CD8-positive, alpha-beta T cell (primary cell): ENCODE measurements at regions of chr10 and their contacts with region 1.

Region 1: DNA sequence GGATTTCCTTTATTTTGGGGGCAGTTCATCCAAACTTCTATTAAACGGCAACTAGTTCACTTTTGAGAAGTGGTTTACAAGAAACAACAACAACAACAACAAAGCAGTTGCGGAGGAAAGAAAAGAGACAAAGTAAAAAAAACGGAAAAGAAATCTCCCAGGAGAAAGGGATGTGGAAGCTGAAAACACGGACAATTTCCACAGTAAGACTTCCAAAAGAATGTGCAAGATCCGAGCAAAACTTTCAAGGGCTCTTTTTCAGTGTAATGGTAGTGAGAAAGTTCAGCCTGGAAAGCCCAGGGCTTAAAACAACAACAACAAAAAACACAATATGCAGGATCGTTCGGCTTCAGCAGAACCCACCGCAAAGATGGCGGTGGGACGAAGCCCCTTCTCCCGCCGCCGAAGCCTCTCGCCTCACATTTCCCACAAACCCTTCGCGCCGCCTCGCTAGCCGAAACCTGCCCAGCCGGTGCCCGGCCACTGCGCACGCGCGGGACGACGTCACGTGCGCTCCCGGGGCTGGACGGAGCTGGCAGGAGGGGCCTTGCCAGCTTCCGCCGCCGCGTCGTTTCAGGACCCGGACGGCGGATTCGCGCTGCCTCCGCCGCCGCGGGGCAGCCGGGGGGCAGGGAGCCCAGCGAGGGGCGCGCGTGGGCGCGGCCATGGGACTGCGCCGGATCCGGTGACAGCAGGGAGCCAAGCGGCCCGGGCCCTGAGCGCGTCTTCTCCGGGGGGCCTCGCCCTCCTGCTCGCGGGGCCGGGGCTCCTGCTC is at the start of gene TNKS2:
- DNase-seq: peak; percentile 83 to 96 (median 92)
- ATAC-seq: peak; percentile 69
- H3K4me3 ChIP-seq: peak within 1 kb of the TSS; percentile 81 to 85
- H3K4me3 Mint-ChIP-seq: peak within 1 kb of the TSS; percentile 99
- H3K27ac ChIP-seq: peak within 1 kb of the TSS; percentile 88 to 91
- H3K27ac Mint-ChIP-seq: peak within 1 kb of the TSS; percentile 99
- H3K4me1 ChIP-seq: peaks cover 35% of the 10 kb centered on the region
- H3K4me1 Mint-ChIP-seq: peaks cover 64% of the 10 kb centered on the region
- H3K27me3 ChIP-seq: no peaks in the 10 kb centered on the region
- H3K27me3 Mint-ChIP-seq: no peaks in the 10 kb centered on the region
- CTCF ChIP-seq: no peak
- total RNA-seq, gene TNKS2: 46.4 to 49.4 TPM

Region 2: DNA sequence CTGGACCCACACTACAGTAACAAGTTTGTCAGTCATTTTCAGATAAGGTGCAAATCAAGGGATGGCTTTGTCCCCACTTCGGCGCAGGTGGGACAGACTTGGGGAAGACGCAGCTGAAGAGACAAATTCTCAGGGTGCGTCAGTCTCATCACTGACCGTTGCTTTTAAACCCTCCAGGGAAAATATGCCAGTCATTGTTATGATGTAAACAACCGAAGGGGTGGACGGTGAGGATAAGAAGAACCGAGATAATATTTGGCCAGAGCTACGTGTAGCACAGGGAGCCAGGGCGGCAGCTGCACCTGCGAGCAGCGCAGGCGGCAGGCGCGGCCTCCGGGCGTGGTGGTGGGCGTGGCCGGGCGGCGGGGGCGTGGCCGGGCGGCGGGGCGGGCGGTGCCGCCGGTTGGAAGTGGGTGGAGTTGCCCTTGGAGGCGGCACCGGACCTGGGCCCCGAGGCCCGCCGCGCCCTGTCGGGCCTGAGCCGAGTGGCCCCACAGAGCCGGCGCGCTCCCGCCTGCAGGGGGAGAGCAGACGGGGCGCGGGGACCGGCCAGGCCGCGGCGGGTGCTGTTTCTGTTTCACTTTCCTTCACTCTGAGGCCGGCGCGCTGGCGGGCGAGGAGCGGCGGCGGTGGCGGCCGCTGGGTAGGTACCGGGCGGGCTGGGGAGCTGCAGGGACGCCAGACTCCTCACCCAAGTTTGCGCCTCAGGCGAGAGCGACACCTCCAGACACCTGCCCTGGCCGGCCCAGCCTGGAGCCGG is 577.7 kb before region 1 on chr10 and contains the start of gene PCGF5:
- CTCF ChIA-PET with region 1: no interaction called
- POLR2A ChIA-PET with region 1: no interaction called
- intact Hi-C with region 1: loop called in 1 of 2 experiments (anchors 10 kb)
- DNase-seq: peak; percentile 87 to 97 (median 91)
- ATAC-seq: peak; percentile 94
- H3K4me3 ChIP-seq: peak within 1 kb of the TSS; percentile 66 to 80
- H3K4me3 Mint-ChIP-seq: peak within 1 kb of the TSS; percentile 89
- H3K27ac ChIP-seq: peak within 1 kb of the TSS; percentile 74 to 76
- H3K27ac Mint-ChIP-seq: peak within 1 kb of the TSS; percentile 91
- H3K4me1 ChIP-seq: peaks cover 32% of the 10 kb centered on the region
- H3K4me1 Mint-ChIP-seq: peaks cover 51% of the 10 kb centered on the region
- H3K27me3 ChIP-seq: no peaks in the 10 kb centered on the region
- H3K27me3 Mint-ChIP-seq: no peaks in the 10 kb centered on the region
- CTCF ChIP-seq: no peak
- total RNA-seq, gene PCGF5: 67.5 to 70.7 TPM

Region 3: GRCh38 chr10:91758303-91759146 is 39.5 kb before region 1 on chr10:
- CTCF ChIA-PET with region 1: interaction called, 6 read pairs
- POLR2A ChIA-PET with region 1: interaction called, 5 read pairs
- intact Hi-C with region 1: loop called (anchors 2 kb)
- DNase-seq: peak in 2 of 9 experiments; percentile 67 to 77
- ATAC-seq: peak; percentile 78
- H3K4me3 ChIP-seq: no peak overlapping the region
- H3K4me3 Mint-ChIP-seq: no peak overlapping the region
- H3K27ac ChIP-seq: no peak overlapping the region
- H3K27ac Mint-ChIP-seq: no peak overlapping the region
- H3K4me1 ChIP-seq: no peaks in the 10 kb centered on the region
- H3K4me1 Mint-ChIP-seq: peaks cover 5% of the 10 kb centered on the region
- H3K27me3 ChIP-seq: no peaks in the 10 kb centered on the region
- H3K27me3 Mint-ChIP-seq: peaks cover 11% of the 10 kb centered on the region
- CTCF ChIP-seq: peak; percentile 74

Region 4: GRCh38 chr10:91923371-91924211 is 125.5 kb after region 1 on chr10 and contains the start of gene BTAF1:
- CTCF ChIA-PET with region 1: no interaction called
- POLR2A ChIA-PET with region 1: interaction called, 8 read pairs
- intact Hi-C with region 1: loop called in 1 of 2 experiments (anchors 1 kb)
- DNase-seq: peak; percentile 82 to 97 (median 93)
- ATAC-seq: peak; percentile 94
- H3K4me3 ChIP-seq: peak within 1 kb of the TSS; percentile 87 to 97
- H3K4me3 Mint-ChIP-seq: peak within 1 kb of the TSS; percentile 99
- H3K27ac ChIP-seq: peak within 1 kb of the TSS; percentile 92 to 97
- H3K27ac Mint-ChIP-seq: peak within 1 kb of the TSS; percentile 98
- H3K4me1 ChIP-seq: peaks cover 36% of the 10 kb centered on the region
- H3K4me1 Mint-ChIP-seq: peaks cover 50% of the 10 kb centered on the region
- H3K27me3 ChIP-seq: peaks cover 0 to 2% of the 10 kb centered on the region in 2 experiments
- H3K27me3 Mint-ChIP-seq: peaks cover 2% of the 10 kb centered on the region
- CTCF ChIP-seq: no peak
- total RNA-seq, gene BTAF1: 88.6 to 90.7 TPM

Region 5: DNA sequence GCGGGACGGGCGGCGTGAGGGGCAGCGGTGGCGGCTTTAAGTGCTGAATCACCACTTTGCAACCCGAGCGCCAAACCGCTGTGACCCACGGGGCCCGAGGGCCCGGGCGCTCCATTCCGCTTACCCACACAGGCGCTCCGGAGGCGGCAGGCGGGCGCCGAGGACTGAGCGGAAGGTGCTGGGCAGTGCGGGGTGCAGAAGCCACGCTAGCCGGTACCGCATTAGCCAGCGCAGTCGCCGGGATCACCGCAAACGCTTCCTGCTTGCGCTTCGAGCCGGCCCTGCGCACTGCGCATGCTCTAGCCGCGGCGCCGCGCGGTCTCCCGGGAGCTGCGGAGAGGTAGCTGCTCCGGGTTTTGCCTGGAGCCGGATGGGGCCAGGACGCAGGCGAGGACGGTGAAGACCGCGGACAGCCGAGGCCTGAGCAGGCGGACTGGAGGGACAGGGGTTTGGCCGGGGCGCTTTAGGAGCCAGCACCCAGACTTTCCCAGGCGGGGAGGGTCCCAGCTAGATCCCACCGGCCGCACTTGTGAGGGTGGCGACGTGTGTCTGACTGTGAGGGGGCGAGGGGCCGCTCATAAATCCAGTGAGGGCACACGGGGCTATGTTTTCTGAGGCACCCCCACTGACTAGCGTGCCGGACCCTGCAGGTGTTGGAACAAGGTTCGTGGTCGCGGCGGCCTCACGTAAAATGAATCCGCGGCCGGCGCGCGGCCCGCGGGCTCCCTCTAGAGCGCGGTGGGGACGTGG is 775.9 kb after region 1 on chr10 and contains the start of gene IDE:
- CTCF ChIA-PET with region 1: no interaction called
- POLR2A ChIA-PET with region 1: no interaction called
- intact Hi-C with region 1: loop called in 1 of 2 experiments (anchors 5 kb)
- DNase-seq: peak; percentile 43 to 89 (median 76)
- ATAC-seq: peak; percentile 70
- H3K4me3 ChIP-seq: peak within 1 kb of the TSS; percentile 85 to 100
- H3K4me3 Mint-ChIP-seq: peak within 1 kb of the TSS; percentile 93
- H3K27ac ChIP-seq: peak within 1 kb of the TSS; percentile 74 to 92
- H3K27ac Mint-ChIP-seq: peak within 1 kb of the TSS; percentile 93
- H3K4me1 ChIP-seq: peaks cover 18% of the 10 kb centered on the region
- H3K4me1 Mint-ChIP-seq: peaks cover 42% of the 10 kb centered on the region
- H3K27me3 ChIP-seq: no peaks in the 10 kb centered on the region
- H3K27me3 Mint-ChIP-seq: no peaks in the 10 kb centered on the region
- CTCF ChIP-seq: no peak
- total RNA-seq, gene IDE: 12.1 to 13.2 TPM